Gastrocnemius medialis (tissue), 4 donors: ENCODE measurements at regions of chr7 and their contacts with region 1.

Region 1: DNA sequence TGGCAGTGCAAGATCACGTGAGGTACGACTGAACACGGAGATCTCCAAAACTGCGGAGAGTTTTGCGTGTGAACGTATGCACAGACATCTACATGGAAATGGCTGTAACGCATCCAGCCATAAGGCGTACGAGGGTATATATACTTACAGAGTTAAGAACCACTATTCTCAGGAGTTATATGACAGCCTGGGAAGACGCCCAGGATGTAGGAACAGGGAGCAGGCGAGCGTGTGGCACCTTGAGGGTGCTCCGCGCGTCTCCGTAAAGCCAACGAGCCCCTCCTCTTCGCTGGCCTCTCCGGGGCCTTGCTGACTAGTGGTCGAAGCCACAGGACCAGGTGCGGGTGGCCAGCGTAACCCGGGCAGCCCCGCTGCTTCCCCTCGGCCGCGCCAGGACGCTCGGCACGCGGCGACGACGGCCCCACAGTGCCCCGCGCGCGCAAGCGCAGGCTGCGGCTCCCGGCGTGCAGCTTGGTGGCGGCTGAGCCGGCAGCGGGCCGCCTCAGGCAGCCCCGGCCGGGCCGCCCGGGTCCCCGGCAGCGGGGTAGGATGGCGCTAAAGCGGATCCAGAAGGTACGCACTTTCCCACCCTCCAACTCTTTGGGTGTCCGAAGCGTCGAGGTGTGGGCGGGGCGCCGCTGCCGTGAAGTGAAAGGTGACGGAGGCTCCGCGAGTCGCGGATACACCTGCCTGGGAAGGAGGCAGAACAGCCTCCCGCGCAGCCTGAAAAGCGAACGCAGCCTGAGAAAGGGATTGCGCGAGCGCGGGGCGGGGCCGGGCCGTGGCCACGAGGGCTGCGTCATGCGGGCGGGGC is at the start of gene UBE2D4:
- DNase-seq: peak; percentile 77 to 90
- ATAC-seq: peak; percentile 91 to 94
- H3K4me3 ChIP-seq: peak within 1 kb of the TSS; percentile 65 to 79 (median 70)
- H3K27ac ChIP-seq: peak within 1 kb of the TSS; percentile 92 to 95 (median 94)
- H3K4me1 ChIP-seq: peaks cover 15 to 20% of the 10 kb centered on the region in 2 donors
- H3K27me3 ChIP-seq: no peaks in the 10 kb centered on the region
- CTCF ChIP-seq: no peak
- POLR2A ChIP-seq: peak; percentile 97 to 98
- total RNA-seq, gene UBE2D4: 71.0 to 116 (median 105) TPM

Region 2: DNA sequence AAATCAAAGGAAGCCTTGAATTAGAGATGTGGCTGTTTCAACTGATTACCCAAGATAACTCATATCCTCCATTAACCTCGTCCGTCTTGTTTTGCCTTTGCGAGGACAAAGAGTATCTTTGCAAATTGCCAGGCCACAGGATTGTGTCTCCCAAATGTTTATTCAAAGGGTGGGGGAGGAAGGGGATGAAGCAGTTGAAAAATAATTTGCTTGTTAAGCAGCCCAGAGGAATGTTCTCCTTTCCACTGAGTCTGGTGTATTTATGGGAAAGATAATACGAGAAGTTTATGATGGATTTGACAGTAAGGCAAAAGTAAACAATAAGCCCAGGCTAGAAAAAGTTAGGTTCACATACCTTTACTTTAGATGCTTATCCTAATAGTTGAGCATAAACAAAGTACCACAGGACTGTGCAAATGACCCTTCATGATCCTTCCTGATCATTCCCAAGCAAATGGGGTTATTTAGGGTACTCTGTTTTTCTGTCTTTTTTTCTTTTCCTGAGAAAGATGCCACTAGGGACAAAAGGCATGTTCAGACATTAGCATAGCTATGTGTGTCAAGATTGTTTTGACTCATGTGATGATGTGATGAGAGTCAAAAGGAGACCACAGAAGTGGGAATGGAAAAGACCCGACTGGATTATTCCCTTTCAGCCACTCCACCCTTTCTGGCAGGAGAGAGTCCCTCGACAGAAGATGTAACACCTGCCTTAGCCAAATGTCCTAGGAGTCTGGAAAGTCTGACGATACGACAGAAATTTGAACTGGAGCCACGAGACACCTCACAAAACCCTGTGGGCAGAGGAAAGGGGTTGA is 1446.2 kb before region 1 on chr7:
- in situ Hi-C with region 1: no loop called
- intact Hi-C with region 1: no loop called
- DNase-seq: peak in 1 of 2 donors; percentile 31
- ATAC-seq: peak; percentile 71 to 76
- H3K4me3 ChIP-seq: no peak overlapping the region
- H3K27ac ChIP-seq: peak overlapping the region in 3 of 4 donors; percentile 38 to 58 (median 51)
- H3K4me1 ChIP-seq: no peaks in the 10 kb centered on the region
- H3K27me3 ChIP-seq: no peaks in the 10 kb centered on the region
- CTCF ChIP-seq: no peak
- POLR2A ChIP-seq: no peak

Region 3: GRCh38 chr7:43869006-43869866 is 57.0 kb before region 1 on chr7 and contains the start of gene MRPS24:
- in situ Hi-C with region 1: no loop called
- intact Hi-C with region 1: loop called (anchors 1 kb)
- DNase-seq: peak; percentile 94 to 96
- ATAC-seq: peak; percentile 82 to 89
- H3K4me3 ChIP-seq: peak within 1 kb of the TSS; percentile 77 to 94 (median 82)
- H3K27ac ChIP-seq: peak within 1 kb of the TSS; percentile 89 to 94 (median 92)
- H3K4me1 ChIP-seq: peaks cover 30 to 37% of the 10 kb centered on the region in 2 donors
- H3K27me3 ChIP-seq: no peaks in the 10 kb centered on the region
- CTCF ChIP-seq: no peak
- POLR2A ChIP-seq: peak; percentile 57 to 66
- total RNA-seq, gene MRPS24: 173 to 294 (median 255) TPM

Region 4: GRCh38 chr7:43888993-43889945 is 36.9 kb before region 1 on chr7:
- in situ Hi-C with region 1: no loop called
- intact Hi-C with region 1: no loop called
- DNase-seq: no peak
- ATAC-seq: no peak
- H3K4me3 ChIP-seq: no peak overlapping the region
- H3K27ac ChIP-seq: peak overlapping the region in 1 of 4 donors; percentile 25
- H3K4me1 ChIP-seq: peaks cover 10 to 24% of the 10 kb centered on the region in 2 donors
- H3K27me3 ChIP-seq: no peaks in the 10 kb centered on the region
- CTCF ChIP-seq: no peak
- POLR2A ChIP-seq: no peak

Region 5: DNA sequence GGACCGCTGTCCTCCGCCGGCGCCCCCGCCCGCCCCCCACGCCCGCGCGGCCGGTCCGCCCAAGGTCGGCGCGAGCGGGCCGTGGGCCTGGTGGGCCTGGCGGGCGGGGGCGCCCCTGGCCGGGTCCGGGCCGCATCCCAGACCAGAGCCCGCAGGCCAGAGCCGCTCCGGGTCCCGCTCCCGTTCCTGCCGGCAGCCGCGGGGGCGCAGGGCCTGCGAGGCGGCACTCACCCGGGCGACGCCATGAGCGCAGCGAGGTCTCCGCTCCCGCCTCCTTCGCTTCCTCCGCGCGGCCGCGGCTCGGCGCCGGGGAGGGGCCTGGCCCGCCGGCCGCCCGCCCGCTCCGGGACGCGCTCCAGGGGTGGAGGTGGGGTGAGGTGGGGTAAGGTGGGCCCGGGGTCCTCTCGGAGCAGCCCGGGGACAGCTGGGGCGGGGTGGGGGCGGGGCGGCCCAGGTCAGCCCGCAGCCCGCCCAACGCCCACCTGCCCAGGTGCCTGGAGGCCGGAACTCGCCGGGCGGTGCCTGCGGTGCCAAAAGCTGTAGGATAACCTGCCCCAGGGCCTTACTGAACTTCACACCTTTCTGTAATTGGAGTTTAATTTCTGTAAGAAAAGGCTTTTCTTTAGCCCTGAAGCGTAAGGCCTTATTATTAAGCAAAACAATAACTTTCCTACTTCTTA is 19.7 kb before region 1 on chr7 and contains the start of gene URGCP:
- in situ Hi-C with region 1: no loop called
- intact Hi-C with region 1: loop called (anchors 2 kb)
- DNase-seq: peak in 1 of 2 donors; percentile 24
- ATAC-seq: peak; percentile 77 to 79
- H3K4me3 ChIP-seq: peak within 1 kb of the TSS; percentile 65 to 78 (median 70)
- H3K27ac ChIP-seq: peak within 1 kb of the TSS; percentile 72 to 89 (median 77)
- H3K4me1 ChIP-seq: peaks cover 36 to 40% of the 10 kb centered on the region in 2 donors
- H3K27me3 ChIP-seq: no peaks in the 10 kb centered on the region
- CTCF ChIP-seq: no peak
- POLR2A ChIP-seq: no peak
- total RNA-seq, gene URGCP: 29.0 to 47.7 (median 38.3) TPM